Naive thymus-derived CD8-positive, alpha-beta T cell (primary cell): ENCODE measurements at regions of chr21 and their contacts with region 1.

Region 1: DNA sequence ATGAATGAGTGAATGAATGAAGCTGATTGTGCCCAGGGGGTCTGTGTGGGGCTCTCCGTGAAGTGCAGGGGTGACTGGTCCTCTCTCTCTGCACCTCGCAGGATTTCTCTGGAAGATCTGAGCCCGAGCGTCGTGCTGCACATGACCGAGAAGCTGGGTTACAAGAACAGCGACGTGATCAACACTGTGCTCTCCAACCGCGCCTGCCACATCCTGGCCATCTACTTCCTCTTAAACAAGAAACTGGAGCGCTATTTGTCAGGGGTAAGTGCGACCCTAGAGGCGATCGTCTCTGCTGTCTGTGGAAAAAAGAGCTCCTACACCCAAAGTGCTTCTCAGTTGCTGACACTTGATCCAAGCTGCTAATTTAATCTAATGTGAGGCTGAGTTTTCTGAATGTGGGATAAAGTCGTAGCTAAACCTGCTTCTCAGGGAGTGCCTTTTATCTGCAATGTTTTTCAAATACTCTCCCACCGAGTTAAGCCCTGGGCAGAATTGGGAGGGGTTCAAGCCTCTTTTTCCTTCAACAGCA is 101.7 kb downstream of the HUNK start:
- DNase-seq: peak; percentile 28 to 85 (median 56)
- ATAC-seq: peak; percentile 99
- H3K4me3 Mint-ChIP-seq: peak overlapping the region; percentile 50 to 76 (median 66)
- H3K27ac Mint-ChIP-seq: peak overlapping the region; percentile 52 to 90 (median 86)
- H3K4me1 Mint-ChIP-seq: peaks cover 20 to 43% (median 28%) of the 10 kb centered on the region in 4 donors
- H3K27me3 Mint-ChIP-seq: no peaks in the 10 kb centered on the region

Region 2: DNA sequence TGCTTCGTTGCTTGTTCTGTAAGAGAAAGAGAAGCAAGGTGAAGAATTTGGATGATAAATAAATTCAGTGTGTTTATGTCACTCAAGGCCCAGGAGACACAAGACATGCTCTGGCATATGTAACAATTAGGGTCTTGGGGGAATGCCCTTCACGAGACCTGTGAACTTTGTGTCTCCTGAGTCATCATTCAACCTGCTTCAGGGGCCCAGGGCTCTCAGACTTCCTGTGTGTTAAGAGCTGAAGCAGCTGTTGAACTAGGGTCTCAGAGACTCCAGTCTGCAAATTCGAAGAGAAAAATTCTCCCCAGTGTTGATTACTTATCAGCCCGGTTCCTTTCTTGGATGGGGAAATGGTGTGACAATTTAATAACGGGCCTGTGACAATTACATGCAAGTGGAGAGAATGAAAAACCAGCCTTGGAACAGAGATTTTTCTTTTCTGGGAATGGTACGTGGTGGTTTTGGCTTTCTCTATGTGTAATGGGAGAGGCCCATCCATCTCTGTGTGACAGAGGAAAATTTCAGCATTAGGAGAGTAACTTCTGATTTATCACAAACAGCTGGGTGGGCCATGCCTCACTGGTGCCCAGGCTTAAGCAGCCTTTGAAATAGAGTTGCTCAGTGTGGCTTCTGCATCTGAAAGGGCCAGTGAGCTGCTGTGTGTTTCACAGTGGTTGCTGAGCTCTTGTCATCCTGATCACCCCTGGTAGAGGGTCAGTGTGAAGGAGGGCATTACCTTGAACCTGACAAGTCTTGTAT is 79.3 kb before region 1 on chr21:
- POLR2A ChIA-PET with region 1: no interaction called
- DNase-seq: no peak
- ATAC-seq: no peak
- H3K4me3 Mint-ChIP-seq: no peak overlapping the region
- H3K27ac Mint-ChIP-seq: peak overlapping the region in 2 of 10 donors; percentile 12 to 34
- H3K4me1 Mint-ChIP-seq: peaks cover 6 to 24% (median 20%) of the 10 kb centered on the region in 4 donors
- H3K27me3 Mint-ChIP-seq: peaks cover 0 to 9% (median 6%) of the 10 kb centered on the region in 5 donors

Region 3: DNA sequence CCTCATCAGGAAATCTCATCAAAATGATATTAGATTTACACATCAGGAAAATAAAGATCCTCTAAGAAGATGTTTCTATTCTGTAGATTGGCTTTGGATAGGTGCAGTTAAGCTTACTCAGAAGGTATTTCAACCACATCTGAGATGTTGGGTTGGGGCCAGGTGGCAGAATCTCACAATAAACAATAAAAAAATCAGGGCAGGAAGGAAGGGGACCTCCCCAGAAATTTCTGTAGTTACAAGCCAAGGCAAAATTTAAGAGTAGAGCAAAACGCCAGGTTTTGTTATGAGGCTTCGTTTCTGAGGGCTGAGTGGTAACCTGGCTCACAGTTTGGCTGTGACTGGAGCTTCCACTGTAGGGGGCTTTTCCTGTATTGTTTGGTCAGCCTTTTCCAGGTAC is 16.9 kb before region 1 on chr21:
- POLR2A ChIA-PET with region 1: interaction called, 14 read pairs
- DNase-seq: peak in 8 of 10 donors; percentile 7 to 78 (median 53)
- ATAC-seq: peak; percentile 94 to 96
- H3K4me3 Mint-ChIP-seq: peak overlapping the region in 8 of 10 donors; percentile 4 to 79 (median 40)
- H3K27ac Mint-ChIP-seq: peak overlapping the region; percentile 35 to 93 (median 83)
- H3K4me1 Mint-ChIP-seq: peaks cover 17 to 42% (median 28%) of the 10 kb centered on the region in 4 donors
- H3K27me3 Mint-ChIP-seq: peaks cover 0 to 3% (median 1%) of the 10 kb centered on the region in 5 donors